ENCODE measurements at regions of chr15 and their contacts with region 1.

Region 1: GRCh38 chr15:31472636-31473384 is 146.2 kb downstream of the KLF13 start:
- DNase-seq: peak; percentile 68
- H3K4me3 Mint-ChIP-seq: peak overlapping the region; percentile 76
- H3K27ac Mint-ChIP-seq: peak overlapping the region; percentile 90
- H3K4me1 Mint-ChIP-seq: peaks cover 59% of the 10 kb centered on the region
- H3K27me3 Mint-ChIP-seq: no peaks in the 10 kb centered on the region

Region 2: GRCh38 chr15:31483053-31483985 is 10.5 kb after region 1 on chr15:
- intact Hi-C with region 1: loop called (anchors 1 kb)
- DNase-seq: peak; percentile 42
- H3K4me3 Mint-ChIP-seq: peak overlapping the region; percentile 92
- H3K27ac Mint-ChIP-seq: peak overlapping the region; percentile 99
- H3K4me1 Mint-ChIP-seq: peaks cover 64% of the 10 kb centered on the region
- H3K27me3 Mint-ChIP-seq: peaks cover 2% of the 10 kb centered on the region

Measured in activated T-helper 1 cell treated with anti-CD3 and anti-CD28 coated beads, Interleukin-12 subunit alpha, Interleukin-12 subunit beta, Interleukin-2, Interleukin-4 antibody, amounts not matched to agents 30 ng/mL and 10 ng/mL and 1 ng/mL, durations not matched to agents 14 hours and 24 hours and 36 hours (primary cell).